Panc1 (cell line): ENCODE measurements at regions of chr3 and their contacts with region 1.

Region 1: DNA sequence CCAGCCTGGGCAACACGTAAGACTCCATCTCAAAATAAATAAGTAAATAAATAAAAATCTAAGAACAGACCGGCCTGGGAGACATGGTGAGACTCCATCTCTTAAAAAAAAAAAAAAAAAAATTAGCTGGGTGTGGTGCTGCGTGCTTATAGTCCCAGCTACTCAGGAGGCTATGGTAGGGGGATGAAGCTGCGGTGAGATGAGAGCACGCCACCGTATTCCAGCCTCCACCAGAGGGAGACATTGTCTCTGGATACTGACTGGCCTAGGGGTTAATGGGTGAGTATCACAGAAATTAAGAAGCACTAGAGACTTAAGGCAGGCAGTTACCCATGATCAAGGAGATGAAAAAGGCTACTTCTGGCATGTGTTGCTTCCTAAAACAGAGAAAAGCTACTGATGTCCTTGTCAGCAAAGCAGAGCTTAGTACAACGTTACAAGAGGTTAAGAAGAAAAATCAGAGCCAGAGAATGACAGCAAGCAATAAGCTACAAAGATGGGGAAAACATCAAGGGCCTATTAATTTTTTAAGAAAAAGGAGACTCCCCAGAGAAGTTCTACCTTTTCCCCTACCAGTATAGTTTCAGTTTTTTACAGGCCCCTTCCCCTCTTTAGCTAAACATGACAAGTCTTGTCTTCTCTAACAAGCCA is 8.6 kb downstream of the TFRC start:
- DNase-seq: no peak
- ATAC-seq: peak; percentile 99
- H3K4me3 ChIP-seq: no peak overlapping the region
- H3K27ac ChIP-seq: no peak overlapping the region
- H3K4me1 ChIP-seq: no peaks in the 10 kb centered on the region
- H3K27me3 ChIP-seq: no peaks in the 10 kb centered on the region
- CTCF ChIP-seq: peak; percentile 90

Region 2: GRCh38 chr3:196057760-196058331 is 15.5 kb before region 1 on chr3:
- CTCF ChIA-PET with region 1: interaction called, 11 read pairs
- POLR2A ChIA-PET with region 1: no interaction called
- in situ Hi-C with region 1: no loop called
- intact Hi-C with region 1: no loop called
- DNase-seq: no peak
- ATAC-seq: no peak
- H3K4me3 ChIP-seq: no peak overlapping the region
- H3K27ac ChIP-seq: no peak overlapping the region
- H3K4me1 ChIP-seq: no peaks in the 10 kb centered on the region
- H3K27me3 ChIP-seq: no peaks in the 10 kb centered on the region
- CTCF ChIP-seq: no peak

Region 3: DNA sequence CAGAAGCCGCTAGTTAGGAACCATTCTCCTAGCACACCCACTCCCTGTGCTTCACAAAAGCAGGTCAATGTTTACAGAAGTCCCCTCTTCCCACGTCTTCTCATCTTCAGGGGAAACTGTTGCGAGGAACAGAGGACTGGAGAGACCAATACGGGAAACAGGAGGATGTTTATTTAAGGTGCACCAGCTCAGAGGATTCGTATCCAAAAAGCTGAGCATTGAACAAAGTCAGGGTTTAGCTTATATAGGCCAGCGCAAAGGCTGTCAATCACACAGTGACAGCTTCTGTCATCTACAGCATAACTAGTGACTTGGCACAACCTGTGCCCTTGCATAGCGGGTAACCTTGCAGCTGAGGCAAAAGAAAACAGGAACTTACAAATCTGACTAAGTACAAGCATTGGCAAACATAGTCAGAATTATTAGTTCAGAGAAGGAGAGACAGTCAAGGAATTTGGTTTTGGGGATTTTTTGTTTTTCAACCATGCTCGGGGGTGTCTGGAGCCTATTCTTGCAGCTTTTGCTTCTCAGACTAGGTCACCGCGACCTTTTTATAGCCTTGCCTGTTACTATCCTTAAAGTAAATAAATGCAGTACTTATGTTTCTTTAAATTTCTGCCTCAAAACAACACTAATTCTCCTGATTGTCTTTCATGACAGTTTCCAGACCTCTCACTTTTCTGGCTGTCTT is 76.7 kb after region 1 on chr3:
- CTCF ChIA-PET with region 1: interaction called, 11 read pairs
- POLR2A ChIA-PET with region 1: no interaction called
- in situ Hi-C with region 1: no loop called
- intact Hi-C with region 1: no loop called
- DNase-seq: no peak
- ATAC-seq: no peak
- H3K4me3 ChIP-seq: no peak overlapping the region
- H3K27ac ChIP-seq: no peak overlapping the region
- H3K4me1 ChIP-seq: no peaks in the 10 kb centered on the region
- H3K27me3 ChIP-seq: no peaks in the 10 kb centered on the region
- CTCF ChIP-seq: no peak

Region 4: DNA sequence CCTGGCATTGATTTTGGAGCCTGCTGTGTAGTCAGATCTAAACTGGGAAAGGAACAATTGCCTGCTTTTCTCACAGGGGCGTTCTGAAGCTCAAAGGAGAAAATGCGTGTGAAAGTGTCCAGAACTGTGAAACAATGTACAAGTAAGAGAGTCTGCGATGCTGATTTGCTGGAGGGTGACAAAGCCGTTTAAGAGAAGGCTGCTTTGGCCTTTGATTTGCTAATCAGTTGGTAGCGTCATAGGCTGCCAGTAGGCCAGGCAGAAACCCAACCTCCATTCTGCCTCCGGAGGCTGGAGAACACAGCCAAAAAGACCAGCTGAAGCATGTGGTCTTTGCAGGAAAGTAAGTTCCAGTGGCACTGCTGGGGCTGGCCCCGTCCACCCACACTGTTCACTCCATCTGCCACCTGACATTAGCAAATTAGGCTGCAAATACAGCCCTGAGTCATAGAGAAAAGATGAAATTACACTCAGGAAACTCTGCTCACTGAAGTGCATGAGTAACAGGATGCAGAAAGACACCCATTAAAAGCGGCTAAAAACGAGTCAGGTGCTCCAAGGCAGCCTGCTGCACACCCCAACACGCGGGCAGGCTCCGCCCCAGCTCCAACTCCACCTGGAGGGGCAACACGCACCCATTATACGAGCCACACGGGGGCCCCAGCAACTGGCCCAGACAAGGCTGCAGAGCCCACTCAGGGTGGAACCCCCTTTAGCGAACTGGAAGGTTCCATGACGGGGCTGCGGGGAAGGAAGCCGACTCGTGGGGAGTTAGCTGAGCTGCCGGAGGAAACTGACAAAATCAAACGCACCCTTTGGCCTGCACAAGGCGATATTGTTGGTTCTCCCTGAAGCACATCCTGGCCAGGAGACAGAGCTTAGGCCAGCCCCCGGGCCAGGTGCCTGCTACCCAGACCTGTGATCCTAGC is 106.3 kb after region 1 on chr3:
- CTCF ChIA-PET with region 1: interaction called, 12 read pairs
- POLR2A ChIA-PET with region 1: interaction called, 6 read pairs
- in situ Hi-C with region 1: loop called (anchors 25 kb)
- intact Hi-C with region 1: no loop called
- DNase-seq: no peak
- ATAC-seq: no peak
- H3K4me3 ChIP-seq: no peak overlapping the region
- H3K27ac ChIP-seq: no peak overlapping the region
- H3K4me1 ChIP-seq: peaks cover 10% of the 10 kb centered on the region; the same call in 1 of the 2 replicates
- H3K27me3 ChIP-seq: no peaks in the 10 kb centered on the region
- CTCF ChIP-seq: no peak

Region 5: DNA sequence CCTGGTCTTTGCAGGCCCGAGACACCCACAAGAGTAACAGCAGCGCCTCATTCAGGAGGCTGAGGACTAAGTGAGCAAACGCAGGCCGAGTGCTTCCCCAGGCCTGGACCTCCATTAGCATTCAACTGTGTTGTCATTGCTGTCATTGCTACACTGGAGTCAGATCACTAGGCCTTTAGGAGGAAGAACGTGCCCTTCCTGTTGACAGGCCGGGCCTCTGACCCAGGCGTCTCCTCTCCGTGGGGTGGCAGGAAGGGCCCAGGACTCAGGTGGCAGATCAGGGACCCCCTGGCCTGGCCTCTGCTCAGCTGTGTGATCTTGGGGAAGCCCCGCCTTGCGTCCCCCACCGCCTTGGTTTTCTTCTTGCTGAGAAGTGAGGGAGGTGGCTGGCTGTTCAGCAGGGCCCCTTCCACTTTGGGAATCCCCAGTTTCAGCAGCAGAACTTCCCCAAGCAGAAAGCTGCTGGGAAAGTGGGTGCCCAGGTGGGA is 118.8 kb after region 1 on chr3:
- CTCF ChIA-PET with region 1: interaction called, 15 read pairs
- POLR2A ChIA-PET with region 1: interaction called, 4 read pairs
- in situ Hi-C with region 1: loop called (anchors 25 kb)
- intact Hi-C with region 1: loop called (anchors 1 kb)
- DNase-seq: no peak
- ATAC-seq: no peak
- H3K4me3 ChIP-seq: no peak overlapping the region
- H3K27ac ChIP-seq: no peak overlapping the region
- H3K4me1 ChIP-seq: peaks cover 11% of the 10 kb centered on the region; the same call in 1 of the 2 replicates
- H3K27me3 ChIP-seq: no peaks in the 10 kb centered on the region
- CTCF ChIP-seq: no peak

Region 6: GRCh38 chr3:196202516-196202970 is 129.2 kb after region 1 on chr3:
- CTCF ChIA-PET with region 1: interaction called, 20 read pairs
- POLR2A ChIA-PET with region 1: no interaction called
- in situ Hi-C with region 1: loop called (anchors 25 kb)
- intact Hi-C with region 1: no loop called
- DNase-seq: no peak
- ATAC-seq: peak; percentile 37
- H3K4me3 ChIP-seq: peak overlapping the region in 1 of 2 experiments; percentile 15; a peak in 1 of 4 replicates
- H3K27ac ChIP-seq: no peak overlapping the region
- H3K4me1 ChIP-seq: no peaks in the 10 kb centered on the region
- H3K27me3 ChIP-seq: no peaks in the 10 kb centered on the region
- CTCF ChIP-seq: no peak

Region 7: DNA sequence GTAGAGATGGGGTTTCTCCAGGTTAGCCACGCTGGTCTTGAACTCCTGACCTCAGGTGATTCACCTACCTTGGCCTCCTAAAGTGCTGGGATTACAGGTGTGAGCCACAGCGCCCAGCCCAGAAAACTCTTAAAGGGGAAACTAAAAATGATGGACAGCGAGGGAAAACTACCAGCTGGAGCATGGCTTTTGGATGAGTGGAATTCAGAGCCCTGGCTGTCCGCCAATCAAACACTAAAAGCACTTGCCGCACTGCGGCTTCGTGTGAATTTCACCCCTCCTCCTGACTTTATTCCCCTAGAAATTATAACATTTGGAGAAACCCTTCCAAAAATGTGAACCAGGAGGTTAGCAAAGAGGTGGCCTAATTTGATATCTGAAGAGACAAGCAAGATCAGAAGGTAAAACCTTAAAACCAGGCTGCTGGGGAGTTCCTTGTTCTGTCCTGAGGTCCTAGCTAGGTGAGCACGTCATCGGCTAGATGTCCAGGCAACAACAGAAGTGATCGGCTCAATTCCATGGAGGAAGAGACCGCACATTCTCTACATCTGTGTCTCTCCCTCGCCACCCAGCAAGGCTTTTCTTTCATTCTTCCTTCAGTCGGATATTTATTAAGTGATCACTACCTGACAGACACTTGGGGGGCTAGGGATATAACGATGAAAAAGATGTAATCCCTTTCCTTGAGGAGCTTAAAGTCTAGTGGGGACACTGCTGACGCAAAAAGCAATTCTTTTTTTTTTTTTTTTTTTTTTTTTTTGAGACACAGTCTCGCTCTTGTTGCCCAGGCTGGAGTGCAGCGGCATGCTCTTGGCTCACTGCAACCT is 263.2 kb after region 1 on chr3:
- CTCF ChIA-PET with region 1: no interaction called
- POLR2A ChIA-PET with region 1: interaction called, 15 read pairs
- in situ Hi-C with region 1: no loop called
- intact Hi-C with region 1: no loop called
- DNase-seq: no peak
- ATAC-seq: no peak
- H3K4me3 ChIP-seq: no peak overlapping the region
- H3K27ac ChIP-seq: no peak overlapping the region
- H3K4me1 ChIP-seq: no peaks in the 10 kb centered on the region
- H3K27me3 ChIP-seq: no peaks in the 10 kb centered on the region
- CTCF ChIP-seq: no peak